Activated naive CD8-positive, alpha-beta T cell treated with anti-CD3 and anti-CD28 coated beads, Interleukin-2, amount 10 ng/mL, durations not matched to agents 7 days and 5 days (primary cell): ENCODE measurements at regions of chr2 and their contacts with region 1.

Region 1: GRCh38 chr2:53994818-53995808 is 24.3 kb upstream of the PSME4 start:
- DNase-seq: no peak
- ATAC-seq: peak; percentile 97
- H3K4me3 Mint-ChIP-seq: peak overlapping the region; percentile 71
- H3K27ac Mint-ChIP-seq: peak overlapping the region; percentile 96
- H3K4me1 Mint-ChIP-seq: peaks cover 19% of the 10 kb centered on the region
- H3K27me3 Mint-ChIP-seq: no peaks in the 10 kb centered on the region

Region 2: GRCh38 chr2:53970724-53971602 is 24.1 kb before region 1 on chr2 and contains the start of gene PSME4:
- POLR2A ChIA-PET with region 1: interaction called, 40 read pairs
- DNase-seq: peak; percentile 97
- ATAC-seq: peak; percentile 91
- H3K4me3 Mint-ChIP-seq: peak within 1 kb of the TSS; percentile 98
- H3K27ac Mint-ChIP-seq: peak within 1 kb of the TSS; percentile 98
- H3K4me1 Mint-ChIP-seq: peaks cover 31% of the 10 kb centered on the region
- H3K27me3 Mint-ChIP-seq: no peaks in the 10 kb centered on the region
- total RNA-seq, gene PSME4: 52.6 to 54.2 TPM